ENCODE measurements at regions of chr7 and their contacts with region 1.

Region 1: GRCh38 chr7:100081535-100082102 is at the start of gene ZNF3:
- DNase-seq: peak; percentile 99
- ATAC-seq: peak; percentile 77
- H3K4me3 ChIP-seq: peak within 1 kb of the TSS; percentile 70 to 84 (median 79)
- H3K4me3 Mint-ChIP-seq: peak within 1 kb of the TSS; percentile 86
- H3K27ac ChIP-seq: peak within 1 kb of the TSS; percentile 81 to 91
- H3K27ac Mint-ChIP-seq: peak within 1 kb of the TSS; percentile 91
- H3K4me1 ChIP-seq: peaks cover 16 to 24% of the 10 kb centered on the region in 2 donors
- H3K4me1 Mint-ChIP-seq: peaks cover 32% of the 10 kb centered on the region
- H3K27me3 ChIP-seq: no peaks in the 10 kb centered on the region
- H3K27me3 Mint-ChIP-seq: no peaks in the 10 kb centered on the region
- CTCF ChIP-seq: peak; percentile 96
- total RNA-seq, gene ZNF3: 44.8 and 48.5 TPM in 2 replicates

Region 2: DNA sequence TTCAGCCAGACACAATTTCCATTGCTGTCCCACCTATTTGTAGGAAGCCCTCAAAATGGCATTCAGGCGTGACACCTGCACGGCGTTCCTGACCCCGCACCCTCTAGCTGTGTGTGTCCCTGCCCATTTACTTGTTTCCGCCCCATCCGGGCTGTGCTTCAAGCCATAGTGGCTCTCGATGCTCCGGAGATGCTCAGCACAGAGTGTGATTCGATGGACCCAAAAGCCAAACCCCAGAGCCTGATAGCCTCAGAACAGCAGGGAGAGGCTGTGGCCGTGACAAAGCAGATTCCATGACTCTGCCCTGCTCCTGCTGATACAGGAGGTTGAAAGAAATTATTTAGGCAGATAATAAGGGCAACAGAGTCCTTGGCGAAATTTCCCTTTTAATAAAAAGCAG is 659.4 kb before region 1 on chr7:
- CTCF ChIA-PET with region 1: no interaction called
- POLR2A ChIA-PET with region 1: no interaction called
- intact Hi-C with region 1: no loop called
- DNase-seq: no peak
- ATAC-seq: no peak
- H3K4me3 ChIP-seq: no peak overlapping the region
- H3K4me3 Mint-ChIP-seq: no peak overlapping the region
- H3K27ac ChIP-seq: no peak overlapping the region
- H3K27ac Mint-ChIP-seq: no peak overlapping the region
- H3K4me1 ChIP-seq: no peaks in the 10 kb centered on the region
- H3K4me1 Mint-ChIP-seq: no peaks in the 10 kb centered on the region
- H3K27me3 ChIP-seq: no peaks in the 10 kb centered on the region
- H3K27me3 Mint-ChIP-seq: no peaks in the 10 kb centered on the region
- CTCF ChIP-seq: no peak

Region 3: DNA sequence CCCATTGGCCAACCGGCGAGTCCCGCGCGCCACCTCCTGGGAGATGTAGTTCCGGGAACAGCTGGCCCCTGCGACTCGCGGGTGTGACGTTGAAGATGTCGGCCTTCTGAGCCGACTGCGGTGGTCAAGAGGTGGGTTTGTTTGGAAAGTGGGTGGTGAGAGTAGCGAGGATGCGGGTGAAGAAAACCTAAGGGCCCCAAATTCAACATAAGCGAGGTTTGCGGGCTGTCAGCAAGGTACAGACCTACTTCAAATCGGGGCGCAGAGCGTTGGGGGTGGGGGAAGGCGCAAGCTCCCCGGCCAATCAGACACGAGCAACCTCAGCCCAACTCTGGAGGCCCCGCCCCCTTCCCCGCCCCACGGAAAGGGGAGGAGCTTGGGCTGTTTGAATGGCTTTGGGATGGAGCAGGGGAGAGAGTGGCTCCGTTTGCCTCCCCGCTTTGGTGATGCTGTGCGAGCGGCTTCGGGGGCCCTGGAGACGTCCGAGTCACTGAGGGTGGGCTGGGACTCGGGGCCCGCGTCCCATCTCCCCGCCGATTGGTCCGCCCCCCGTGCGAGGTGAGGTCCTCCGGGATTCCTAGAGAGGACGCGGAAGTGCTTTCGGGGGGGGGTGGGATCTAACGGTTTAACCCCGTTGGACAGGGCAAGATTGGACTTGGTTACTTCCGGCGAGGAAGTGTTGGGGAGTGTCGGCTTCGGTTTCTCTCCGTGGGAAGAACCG is 576.9 kb before region 1 on chr7 and contains the start of gene ZKSCAN5:
- CTCF ChIA-PET with region 1: no interaction called
- POLR2A ChIA-PET with region 1: no interaction called
- intact Hi-C with region 1: loop called (anchors 10 kb)
- DNase-seq: peak; percentile 99
- ATAC-seq: peak; percentile 84
- H3K4me3 ChIP-seq: peak within 1 kb of the TSS; percentile 76 to 96 (median 93)
- H3K4me3 Mint-ChIP-seq: peak within 1 kb of the TSS; percentile 96
- H3K27ac ChIP-seq: peak within 1 kb of the TSS; percentile 77 to 80
- H3K27ac Mint-ChIP-seq: peak within 1 kb of the TSS; percentile 98
- H3K4me1 ChIP-seq: peaks cover 20 to 27% of the 10 kb centered on the region in 2 donors
- H3K4me1 Mint-ChIP-seq: peaks cover 31% of the 10 kb centered on the region
- H3K27me3 ChIP-seq: no peaks in the 10 kb centered on the region
- H3K27me3 Mint-ChIP-seq: no peaks in the 10 kb centered on the region
- CTCF ChIP-seq: no peak
- total RNA-seq, gene ZKSCAN5: 10.9 and 11.7 TPM in 2 replicates

Region 4: GRCh38 chr7:100049441-100050311 is 31.9 kb before region 1 on chr7 and contains the start of gene ZSCAN21:
- CTCF ChIA-PET with region 1: interaction called, 3 read pairs
- POLR2A ChIA-PET with region 1: interaction called, 11 read pairs
- intact Hi-C with region 1: loop called (anchors 1 kb)
- DNase-seq: peak; percentile 91
- ATAC-seq: peak; percentile 90
- H3K4me3 ChIP-seq: peak within 1 kb of the TSS; percentile 69 to 97 (median 92)
- H3K4me3 Mint-ChIP-seq: peak within 1 kb of the TSS; percentile 97
- H3K27ac ChIP-seq: peak within 1 kb of the TSS; percentile 89 to 95
- H3K27ac Mint-ChIP-seq: peak within 1 kb of the TSS; percentile 97
- H3K4me1 ChIP-seq: peaks cover 6 to 17% of the 10 kb centered on the region in 2 donors
- H3K4me1 Mint-ChIP-seq: peaks cover 19% of the 10 kb centered on the region
- H3K27me3 ChIP-seq: no peaks in the 10 kb centered on the region
- H3K27me3 Mint-ChIP-seq: no peaks in the 10 kb centered on the region
- CTCF ChIP-seq: no peak
- total RNA-seq, gene ZSCAN21: 12.9 and 13.2 TPM in 2 replicates

Region 5: DNA sequence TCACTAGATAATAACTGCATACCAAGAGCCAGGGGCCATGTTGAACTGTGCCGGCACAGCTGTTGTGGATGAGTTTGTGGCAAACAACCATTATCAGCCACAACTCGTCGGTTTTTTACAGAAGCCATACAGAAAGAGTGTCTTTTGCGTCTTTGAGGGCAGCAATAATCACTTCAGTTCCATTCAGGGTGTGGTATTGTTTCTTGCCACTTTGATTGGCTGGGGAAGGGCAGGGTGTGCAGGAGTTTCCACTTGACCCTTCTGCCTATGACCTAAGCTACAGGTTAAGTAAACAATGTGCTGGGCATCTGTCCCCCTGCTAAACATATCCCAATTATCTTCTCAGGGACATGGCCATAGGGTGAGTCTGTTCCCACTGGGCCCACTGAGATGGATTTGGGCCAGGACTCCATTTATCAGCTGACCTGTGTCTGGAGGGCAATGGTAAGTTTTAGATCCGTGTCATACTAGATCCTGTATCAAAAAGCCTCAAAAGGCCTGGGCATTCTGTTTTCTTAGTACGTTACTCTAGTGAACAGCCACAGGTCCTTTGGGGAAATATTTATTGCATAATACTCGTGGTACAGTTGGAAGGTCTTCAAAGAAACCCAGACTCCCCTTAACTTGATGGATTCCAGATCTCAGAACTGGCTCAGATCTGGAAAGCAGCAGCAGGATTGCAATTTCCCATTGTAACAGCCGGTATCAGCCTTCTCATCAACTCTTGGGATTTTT is 16.0 kb before region 1 on chr7:
- CTCF ChIA-PET with region 1: no interaction called
- POLR2A ChIA-PET with region 1: no interaction called
- intact Hi-C with region 1: no loop called
- DNase-seq: no peak
- ATAC-seq: no peak
- H3K4me3 ChIP-seq: no peak overlapping the region
- H3K4me3 Mint-ChIP-seq: no peak overlapping the region
- H3K27ac ChIP-seq: no peak overlapping the region
- H3K27ac Mint-ChIP-seq: no peak overlapping the region
- H3K4me1 ChIP-seq: no peaks in the 10 kb centered on the region
- H3K4me1 Mint-ChIP-seq: no peaks in the 10 kb centered on the region
- H3K27me3 ChIP-seq: no peaks in the 10 kb centered on the region
- H3K27me3 Mint-ChIP-seq: no peaks in the 10 kb centered on the region
- CTCF ChIP-seq: no peak

Region 6: DNA sequence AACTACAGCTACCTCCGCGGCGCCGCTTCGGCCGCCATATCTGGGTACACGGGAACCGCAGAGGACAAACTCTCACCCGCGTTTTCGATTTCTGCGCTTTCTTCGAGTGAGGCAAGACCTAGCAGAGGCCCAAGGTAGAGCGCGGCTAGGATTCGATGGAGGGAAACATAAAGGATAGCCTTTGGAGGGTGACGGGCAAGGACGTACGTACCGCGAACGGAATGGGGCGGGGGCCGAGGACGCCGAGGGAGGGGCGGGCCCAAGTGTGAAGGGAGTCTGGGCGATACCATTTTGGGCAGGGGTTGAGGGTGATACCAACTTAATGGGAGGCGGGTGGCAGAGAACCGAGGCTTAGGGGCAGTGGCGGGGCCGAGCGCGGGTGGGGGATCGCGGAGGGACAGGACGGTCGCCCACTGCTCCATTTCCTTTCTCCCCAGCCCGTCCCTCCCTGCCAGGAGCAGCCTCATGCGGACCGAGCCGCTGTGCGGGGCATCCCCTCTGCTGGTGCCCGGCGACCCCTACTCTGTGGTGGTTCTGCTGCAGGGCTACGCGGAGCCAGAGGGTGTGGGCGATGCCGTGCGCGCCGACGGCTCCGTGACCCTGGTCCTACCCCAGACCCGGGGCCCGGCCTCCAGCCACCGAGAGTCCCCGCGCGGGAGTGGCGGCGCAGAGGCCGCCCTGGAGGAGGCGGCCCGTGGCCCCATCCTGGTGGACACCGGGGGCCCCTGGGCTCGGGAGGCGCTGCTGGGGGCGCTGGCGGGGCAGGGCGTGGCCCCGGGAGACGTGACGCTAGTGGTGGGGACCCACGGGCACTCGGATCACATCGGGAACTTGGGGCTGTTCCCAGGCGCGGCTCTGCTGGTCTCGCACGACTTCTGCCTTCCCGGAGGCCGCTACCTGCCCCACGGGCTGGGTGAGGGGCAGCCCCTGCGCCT is 45.6 kb after region 1 on chr7 and contains the start of gene MBLAC1:
- CTCF ChIA-PET with region 1: interaction called, 13 read pairs
- POLR2A ChIA-PET with region 1: interaction called, 7 read pairs
- intact Hi-C with region 1: loop called (anchors 1 kb)
- DNase-seq: peak; percentile 97
- ATAC-seq: peak; percentile 83
- H3K4me3 ChIP-seq: peak within 1 kb of the TSS; percentile 54 to 84 (median 78)
- H3K4me3 Mint-ChIP-seq: peak within 1 kb of the TSS; percentile 100
- H3K27ac ChIP-seq: peak within 1 kb of the TSS; percentile 83 to 95
- H3K27ac Mint-ChIP-seq: peak within 1 kb of the TSS; percentile 100
- H3K4me1 ChIP-seq: peaks cover 20 to 36% of the 10 kb centered on the region in 2 donors
- H3K4me1 Mint-ChIP-seq: peaks cover 31% of the 10 kb centered on the region
- H3K27me3 ChIP-seq: no peaks in the 10 kb centered on the region
- H3K27me3 Mint-ChIP-seq: no peaks in the 10 kb centered on the region
- CTCF ChIP-seq: no peak
- total RNA-seq, gene MBLAC1: 4.5 TPM in 2 replicates

Region 7: DNA sequence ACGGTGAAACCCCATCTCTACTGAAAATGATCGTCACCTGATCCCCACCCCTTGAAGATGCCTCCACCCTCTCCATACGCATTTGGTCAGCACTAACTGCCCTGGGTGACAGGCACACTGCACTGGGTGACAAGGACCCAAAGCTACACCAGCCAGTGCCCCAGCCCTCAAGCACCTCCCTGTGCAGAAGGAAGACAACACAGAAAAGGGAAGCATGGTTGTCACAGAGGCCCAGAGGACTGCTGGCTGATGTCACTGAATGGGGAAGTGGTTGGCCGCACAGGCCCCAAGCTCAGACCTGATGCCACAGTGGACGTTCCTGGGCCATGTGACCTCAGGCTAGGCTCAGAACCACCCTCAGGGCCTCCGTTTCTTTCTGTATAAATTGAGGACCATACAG is 287.5 kb after region 1 on chr7:
- CTCF ChIA-PET with region 1: no interaction called
- POLR2A ChIA-PET with region 1: no interaction called
- intact Hi-C with region 1: loop called (anchors 1 kb)
- DNase-seq: peak; percentile 95
- ATAC-seq: peak; percentile 84
- H3K4me3 ChIP-seq: no peak overlapping the region
- H3K4me3 Mint-ChIP-seq: peak overlapping the region; percentile 87
- H3K27ac ChIP-seq: peak overlapping the region; percentile 97 to 99
- H3K27ac Mint-ChIP-seq: peak overlapping the region; percentile 99
- H3K4me1 ChIP-seq: peaks cover 68 to 86% of the 10 kb centered on the region in 2 donors
- H3K4me1 Mint-ChIP-seq: peaks cover 81% of the 10 kb centered on the region
- H3K27me3 ChIP-seq: no peaks in the 10 kb centered on the region
- H3K27me3 Mint-ChIP-seq: no peaks in the 10 kb centered on the region
- CTCF ChIP-seq: no peak

Region 8: DNA sequence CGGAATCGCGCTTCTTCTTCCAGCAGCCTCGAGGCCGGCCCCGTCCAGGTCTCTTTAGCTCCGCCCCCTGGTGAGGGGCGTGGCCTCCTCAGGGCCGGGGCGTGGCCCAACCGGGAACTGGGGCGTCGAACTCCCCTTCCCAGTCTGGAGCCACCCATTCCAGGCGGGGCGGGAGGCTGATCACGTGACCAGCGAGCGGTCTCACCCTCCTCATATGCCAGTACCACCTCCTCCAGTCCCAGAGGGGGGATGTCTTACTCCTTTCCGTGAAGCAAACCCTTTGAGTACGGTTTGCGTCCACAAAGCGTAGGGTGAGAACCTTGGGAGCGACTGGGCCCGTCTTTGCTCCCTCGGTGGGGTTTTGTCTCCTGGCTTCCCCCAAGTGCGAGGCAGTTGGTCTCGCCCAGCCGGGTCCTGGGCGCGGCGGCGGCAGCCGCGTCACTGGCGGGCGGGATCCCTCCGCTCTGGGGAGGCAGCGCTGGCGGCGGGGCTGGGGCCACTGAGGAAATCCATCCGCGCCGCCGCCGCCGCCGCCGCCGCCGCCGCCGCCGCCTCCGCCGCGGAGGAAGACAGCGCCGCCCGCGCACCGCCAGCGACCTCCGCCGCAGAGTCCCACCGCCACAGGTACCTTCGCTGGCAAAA is 591.8 kb after region 1 on chr7 and contains the start of gene GNB2:
- CTCF ChIA-PET with region 1: no interaction called
- POLR2A ChIA-PET with region 1: no interaction called
- intact Hi-C with region 1: loop called (anchors 10 kb)
- DNase-seq: peak; percentile 99
- ATAC-seq: peak; percentile 65
- H3K4me3 ChIP-seq: peak within 1 kb of the TSS; percentile 53 to 99 (median 98)
- H3K4me3 Mint-ChIP-seq: peak within 1 kb of the TSS; percentile 96
- H3K27ac ChIP-seq: peak within 1 kb of the TSS; percentile 89 to 97
- H3K27ac Mint-ChIP-seq: peak within 1 kb of the TSS; percentile 97
- H3K4me1 ChIP-seq: peaks cover 0 to 6% of the 10 kb centered on the region in 2 donors
- H3K4me1 Mint-ChIP-seq: peaks cover 8% of the 10 kb centered on the region
- H3K27me3 ChIP-seq: no peaks in the 10 kb centered on the region
- H3K27me3 Mint-ChIP-seq: no peaks in the 10 kb centered on the region
- CTCF ChIP-seq: no peak
- total RNA-seq, gene GNB2: 127 TPM in 2 replicates